AG04449 (cell line): ENCODE measurements at regions of chr11 and their contacts with region 1.

Region 1: DNA sequence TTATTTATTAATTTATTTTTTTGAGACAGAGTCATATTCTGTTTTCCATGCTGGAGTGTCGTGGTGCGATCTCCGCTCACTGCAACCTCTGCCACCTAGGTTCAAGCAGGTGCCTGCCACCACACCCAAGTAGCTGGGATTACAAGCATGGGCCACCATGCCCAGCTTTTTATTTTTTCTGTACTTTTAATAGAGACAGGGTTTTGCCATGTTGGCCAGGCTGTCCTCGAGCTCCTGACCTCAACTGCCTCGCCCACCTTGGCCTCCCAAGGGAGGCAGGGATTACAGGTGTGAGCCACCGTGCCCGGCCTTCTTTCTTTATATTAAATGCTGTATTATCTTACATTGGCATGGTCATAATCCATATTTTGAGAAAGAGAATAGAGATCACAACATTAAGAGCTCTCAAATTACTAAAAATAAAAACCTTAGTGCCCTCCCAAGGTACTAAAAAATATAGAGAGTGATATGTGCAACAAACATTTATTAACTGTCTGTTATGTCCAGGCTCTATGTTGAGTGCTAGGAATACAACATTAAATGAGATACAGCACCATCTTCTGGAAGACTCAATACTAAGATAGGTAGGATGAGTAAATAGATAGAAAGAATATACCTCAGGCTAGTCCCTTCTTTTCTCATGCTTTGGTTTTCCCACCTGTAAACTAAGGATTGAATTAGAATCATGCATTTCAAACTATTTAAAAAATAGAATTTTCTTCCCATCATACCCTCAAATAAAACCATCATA is 84.1 kb downstream of the BBOX1 start:
- DNase-seq: no peak
- H3K4me3 ChIP-seq: no peak overlapping the region
- CTCF ChIP-seq: no peak

Region 2: DNA sequence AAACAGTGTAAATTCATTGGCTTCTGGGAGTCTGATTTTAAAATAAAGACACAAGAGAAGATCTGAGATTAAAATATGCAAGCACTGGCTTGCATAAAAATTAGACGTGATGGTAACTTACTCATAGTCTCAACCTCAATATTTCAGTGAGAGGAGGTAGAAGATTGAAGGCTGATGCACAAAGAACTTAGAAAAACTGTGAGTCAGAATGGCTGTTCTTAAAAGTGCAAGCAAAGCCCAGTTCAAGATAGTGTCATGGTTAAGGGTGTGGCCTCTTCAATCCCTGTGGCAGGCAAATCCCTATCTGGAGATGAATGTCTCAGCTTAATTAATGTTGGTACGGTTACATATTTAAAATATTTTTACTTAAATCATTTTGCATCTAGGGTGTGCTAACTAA is 164.4 kb before region 1 on chr11:
- CTCF ChIA-PET with region 1: no interaction called
- POLR2A ChIA-PET with region 1: no interaction called
- DNase-seq: no peak
- H3K4me3 ChIP-seq: no peak overlapping the region
- CTCF ChIP-seq: no peak

Region 3: GRCh38 chr11:27097538-27097937 is 27.2 kb before region 1 on chr11:
- CTCF ChIA-PET with region 1: no interaction called
- POLR2A ChIA-PET with region 1: no interaction called
- DNase-seq: no peak
- H3K4me3 ChIP-seq: no peak overlapping the region
- CTCF ChIP-seq: no peak

Region 4: GRCh38 chr11:27107548-27107947 is 17.1 kb before region 1 on chr11:
- CTCF ChIA-PET with region 1: interaction called, 10 read pairs
- POLR2A ChIA-PET with region 1: no interaction called
- DNase-seq: no peak
- H3K4me3 ChIP-seq: no peak overlapping the region
- CTCF ChIP-seq: no peak